Right ventricle myocardium inferior (tissue), 1 donor: ENCODE measurements at regions of chr21 and their contacts with region 1.

Region 1: DNA sequence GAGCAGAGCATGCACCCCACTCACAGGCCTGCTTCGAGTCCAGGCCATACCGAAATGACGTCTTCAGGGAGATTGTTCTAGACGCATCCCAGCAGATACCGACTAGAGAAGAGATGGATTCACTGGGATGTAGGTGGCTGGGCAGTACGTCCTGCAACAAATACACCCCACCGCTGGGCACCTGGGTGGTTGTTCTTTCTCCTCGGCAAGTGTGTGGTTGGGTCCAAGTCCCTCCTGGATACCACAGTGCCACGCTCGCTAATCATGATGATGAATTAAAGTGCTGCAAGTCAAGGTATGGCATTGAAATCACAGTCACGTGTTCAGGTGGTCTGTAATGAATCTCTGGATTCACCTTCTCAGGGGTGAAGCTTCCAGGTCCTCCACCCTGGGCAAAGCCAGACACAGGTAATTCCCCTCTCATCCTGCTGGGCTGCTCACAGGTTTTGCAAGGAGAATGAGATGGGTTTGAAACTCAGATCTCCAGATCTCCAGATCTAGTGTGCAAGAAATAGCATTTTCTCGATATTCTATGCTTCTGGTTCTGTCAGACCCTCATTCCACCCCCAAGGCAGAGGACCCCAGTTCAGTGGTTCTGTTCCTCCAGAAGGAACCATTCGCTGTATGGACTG is 45.7 kb downstream of the UBASH3A start:
- DNase-seq: no peak
- ATAC-seq: no peak

Region 2: DNA sequence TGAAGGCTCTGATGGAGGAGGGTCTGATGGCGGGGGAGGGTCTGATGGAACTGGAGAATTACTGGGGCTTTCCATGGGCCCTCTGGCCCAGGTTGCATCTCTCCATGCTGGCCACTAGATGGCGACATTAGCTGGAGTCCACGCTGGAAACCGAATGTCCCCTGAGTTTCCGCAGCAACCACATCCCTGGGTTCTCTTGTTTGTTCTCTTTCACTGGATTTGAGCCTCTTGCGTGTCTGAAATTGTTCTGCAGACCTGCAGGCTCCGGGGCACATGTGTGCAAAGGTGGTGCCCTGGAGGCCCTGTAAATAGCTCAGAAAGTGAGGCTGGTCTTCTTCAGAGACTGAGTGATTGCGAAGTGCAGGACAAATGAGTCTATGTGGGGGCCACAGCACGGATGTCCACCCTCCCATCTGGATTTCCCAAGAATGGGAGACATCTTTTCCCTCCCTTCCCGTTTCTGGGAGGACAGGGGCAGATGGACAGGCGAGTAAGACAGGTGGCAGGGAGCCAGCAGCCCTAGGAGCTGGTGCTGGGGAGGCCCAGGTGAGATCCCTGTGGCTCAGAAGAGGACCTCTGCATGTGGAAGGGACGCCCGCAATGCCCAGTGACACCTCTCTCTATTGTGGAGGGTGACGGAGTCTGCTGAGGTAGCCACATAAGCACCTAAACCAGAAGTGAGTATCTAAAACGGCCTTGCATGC is 303.7 kb before region 1 on chr21:
- intact Hi-C with region 1: loop called (anchors 2 kb)
- DNase-seq: peak; percentile 70
- ATAC-seq: no peak

Region 3: GRCh38 chr21:42337830-42338728 is 111.3 kb before region 1 on chr21:
- intact Hi-C with region 1: loop called (anchors 5 kb)
- DNase-seq: no peak
- ATAC-seq: peak; percentile 50

Region 4: DNA sequence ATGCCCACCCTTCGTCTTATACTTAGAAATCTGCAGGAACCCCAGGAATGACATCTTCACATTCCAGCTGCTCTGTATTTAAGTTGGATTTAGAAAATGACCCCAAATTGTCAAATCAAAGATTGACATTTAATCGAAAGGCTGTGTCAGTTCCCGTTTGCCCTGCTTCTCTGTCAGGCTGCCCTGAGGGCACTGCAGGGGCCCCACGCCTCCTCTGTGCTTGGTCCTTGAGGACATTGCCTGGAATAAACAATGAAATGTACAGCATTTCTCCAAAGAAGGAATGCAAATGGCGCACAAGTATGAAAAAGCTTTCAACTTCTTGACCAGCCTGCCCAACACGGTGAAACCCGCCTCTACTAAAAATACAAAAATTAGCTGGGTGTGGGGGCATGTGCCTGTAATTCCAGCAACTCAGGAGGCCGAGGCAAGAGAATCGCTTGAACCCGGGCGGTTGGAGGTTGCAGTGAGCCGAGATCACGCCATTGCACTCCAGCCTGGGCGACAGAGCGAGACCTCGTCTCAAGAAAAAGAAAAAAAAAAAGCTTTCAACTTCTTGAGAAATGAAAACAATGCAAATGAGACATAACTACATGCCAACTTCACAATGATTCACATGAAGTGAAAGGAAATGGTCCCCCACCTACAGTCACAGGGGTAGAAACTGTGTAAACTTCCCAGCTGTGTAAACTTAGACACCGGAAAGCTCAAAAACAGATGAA is 56.5 kb before region 1 on chr21:
- intact Hi-C with region 1: loop called (anchors 5 kb)
- DNase-seq: no peak
- ATAC-seq: no peak

Region 5: GRCh38 chr21:42496122-42496900 is 46.9 kb after region 1 on chr21 and contains the start of gene RSPH1:
- intact Hi-C with region 1: no loop called
- DNase-seq: peak; percentile 100
- ATAC-seq: peak; percentile 100
- total RNA-seq, gene RSPH1: not detected

Region 6: DNA sequence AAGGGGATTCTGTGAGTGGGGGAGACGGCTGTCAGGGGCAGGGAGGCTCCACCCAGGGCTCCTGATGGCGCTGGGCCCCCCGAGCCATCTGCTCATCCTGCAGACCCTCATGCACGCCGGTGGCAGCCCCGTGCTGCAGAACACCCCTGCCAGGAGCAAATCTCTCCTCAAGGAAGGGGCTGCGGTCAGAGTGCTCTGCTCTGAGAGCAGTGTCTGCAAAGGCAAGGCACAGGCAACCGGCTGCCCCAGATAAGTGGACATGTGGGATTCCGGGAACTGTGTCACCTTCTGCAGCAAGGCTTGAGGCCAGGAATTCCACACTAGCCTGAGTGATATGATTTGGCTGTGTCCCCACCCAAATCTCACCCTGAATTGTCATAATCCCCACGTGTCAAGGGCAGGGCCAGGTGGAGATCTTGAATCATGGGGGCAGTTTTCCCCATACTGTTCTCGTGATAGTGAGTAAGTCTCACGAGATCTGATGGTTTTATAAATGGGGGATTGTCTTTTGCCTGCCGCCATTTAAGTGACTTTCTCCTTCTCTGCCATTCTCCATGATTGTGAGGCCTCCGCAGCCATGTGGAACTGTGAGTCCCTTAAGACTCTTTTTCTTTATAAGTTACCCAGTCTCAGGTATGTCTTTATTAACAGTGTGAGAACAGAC is 305.0 kb after region 1 on chr21:
- intact Hi-C with region 1: no loop called
- DNase-seq: peak; percentile 37
- ATAC-seq: no peak